Tibial artery (tissue), 4 donors: ENCODE measurements at regions of chr1 and their contacts with region 1.

Region 1: DNA sequence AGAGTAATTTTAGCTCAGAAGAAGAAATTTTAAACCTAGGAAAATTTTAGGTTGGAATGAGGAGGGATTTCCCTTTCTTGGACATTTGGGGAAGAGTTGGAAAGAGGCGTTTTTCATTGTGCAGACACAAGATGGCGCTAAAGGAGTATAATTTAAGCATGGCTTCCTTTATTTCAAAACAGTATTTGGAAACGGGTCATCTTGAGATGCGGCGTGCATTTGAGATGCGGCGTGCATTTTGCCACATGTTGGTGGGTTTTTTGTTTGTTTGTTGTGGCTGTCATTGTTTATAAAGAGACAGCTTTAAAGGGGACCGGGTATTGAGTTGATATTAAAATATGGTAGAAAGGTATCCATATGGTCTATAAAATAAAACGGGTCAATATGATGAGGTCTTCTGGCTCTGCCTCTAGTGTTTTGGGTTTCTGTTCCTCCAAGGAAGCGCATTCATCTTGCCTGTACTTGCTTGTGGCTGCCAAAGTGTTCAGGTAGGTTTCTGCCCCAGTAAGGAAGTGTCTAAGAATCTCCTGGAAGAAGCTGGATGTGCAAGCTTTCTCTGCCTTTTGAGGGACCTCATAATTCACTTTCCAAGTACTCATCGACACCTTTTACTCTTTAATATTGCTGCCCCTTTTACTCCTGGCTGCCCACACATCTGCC is 210.3 kb downstream of the SLC35F3 start:
- DNase-seq: peak in 1 of 2 donors; percentile 33
- H3K4me3 ChIP-seq: no peak overlapping the region
- H3K27ac ChIP-seq: no peak overlapping the region
- H3K4me1 ChIP-seq: peaks cover 0 to 5% (median 2%) of the 10 kb centered on the region in 4 donors
- H3K27me3 ChIP-seq: peaks cover 0 to 3% of the 10 kb centered on the region in 2 donors
- CTCF ChIP-seq: peak; percentile 47 to 50

Region 2: GRCh38 chr1:233972939-233973635 is 141.7 kb before region 1 on chr1:
- intact Hi-C with region 1: no loop called
- DNase-seq: no peak
- H3K4me3 ChIP-seq: no peak overlapping the region
- H3K27ac ChIP-seq: no peak overlapping the region
- H3K4me1 ChIP-seq: no peaks in the 10 kb centered on the region
- H3K27me3 ChIP-seq: no peaks in the 10 kb centered on the region
- CTCF ChIP-seq: no peak

Region 3: GRCh38 chr1:234326497-234327366 is 212.0 kb after region 1 on chr1:
- intact Hi-C with region 1: loop called (anchors 10 kb)
- DNase-seq: peak in 1 of 2 donors; percentile 48
- H3K4me3 ChIP-seq: peak overlapping the region; percentile 9 to 42
- H3K27ac ChIP-seq: no peak overlapping the region
- H3K4me1 ChIP-seq: peaks cover 0 to 5% (median 0%) of the 10 kb centered on the region in 4 donors
- H3K27me3 ChIP-seq: peaks cover 0 to 21% of the 10 kb centered on the region in 2 donors
- CTCF ChIP-seq: peak; percentile 50 to 71